ENCODE measurements at regions of chr2 and their contacts with region 1.

Region 1: DNA sequence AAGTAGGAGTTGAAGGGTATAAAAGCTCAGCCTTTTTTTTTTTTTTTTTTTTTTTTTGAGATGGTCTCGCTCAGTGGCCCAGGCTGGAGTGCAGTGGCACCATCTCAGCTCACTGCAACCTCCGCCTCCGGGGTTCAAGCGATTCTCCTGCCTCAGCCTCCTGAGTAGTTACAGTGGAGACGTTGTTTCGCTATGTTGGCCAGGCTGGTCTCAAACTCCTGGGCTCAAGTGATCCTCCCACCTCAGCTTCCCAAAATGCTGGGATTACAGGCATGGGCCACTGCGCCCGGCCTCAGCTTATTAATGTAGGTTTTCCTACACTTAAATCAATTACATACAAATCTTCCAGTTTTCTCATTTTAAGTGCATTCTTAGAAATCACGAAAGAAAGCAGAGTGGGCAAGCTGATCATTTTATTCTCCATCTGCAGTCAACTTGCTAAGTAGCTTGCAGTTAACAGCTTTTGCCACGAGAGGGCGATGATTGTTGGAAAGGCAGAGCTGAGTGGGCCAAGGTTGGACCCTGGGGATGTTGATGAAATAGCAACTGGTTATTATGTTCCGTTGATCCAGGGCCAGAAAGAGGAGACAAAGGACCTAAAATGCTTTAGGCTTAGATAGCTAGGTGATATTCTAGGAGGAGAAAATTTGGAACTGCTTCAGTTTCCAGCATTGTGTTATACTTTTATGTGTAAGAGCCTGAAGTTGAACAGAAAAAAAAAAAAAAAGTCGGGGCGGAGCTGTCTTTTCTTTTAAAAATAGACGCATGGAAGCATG is 234.4 kb upstream of the EPAS1 start:
- DNase-seq: peak; percentile 79
- ATAC-seq: peak; percentile 86

Region 2: DNA sequence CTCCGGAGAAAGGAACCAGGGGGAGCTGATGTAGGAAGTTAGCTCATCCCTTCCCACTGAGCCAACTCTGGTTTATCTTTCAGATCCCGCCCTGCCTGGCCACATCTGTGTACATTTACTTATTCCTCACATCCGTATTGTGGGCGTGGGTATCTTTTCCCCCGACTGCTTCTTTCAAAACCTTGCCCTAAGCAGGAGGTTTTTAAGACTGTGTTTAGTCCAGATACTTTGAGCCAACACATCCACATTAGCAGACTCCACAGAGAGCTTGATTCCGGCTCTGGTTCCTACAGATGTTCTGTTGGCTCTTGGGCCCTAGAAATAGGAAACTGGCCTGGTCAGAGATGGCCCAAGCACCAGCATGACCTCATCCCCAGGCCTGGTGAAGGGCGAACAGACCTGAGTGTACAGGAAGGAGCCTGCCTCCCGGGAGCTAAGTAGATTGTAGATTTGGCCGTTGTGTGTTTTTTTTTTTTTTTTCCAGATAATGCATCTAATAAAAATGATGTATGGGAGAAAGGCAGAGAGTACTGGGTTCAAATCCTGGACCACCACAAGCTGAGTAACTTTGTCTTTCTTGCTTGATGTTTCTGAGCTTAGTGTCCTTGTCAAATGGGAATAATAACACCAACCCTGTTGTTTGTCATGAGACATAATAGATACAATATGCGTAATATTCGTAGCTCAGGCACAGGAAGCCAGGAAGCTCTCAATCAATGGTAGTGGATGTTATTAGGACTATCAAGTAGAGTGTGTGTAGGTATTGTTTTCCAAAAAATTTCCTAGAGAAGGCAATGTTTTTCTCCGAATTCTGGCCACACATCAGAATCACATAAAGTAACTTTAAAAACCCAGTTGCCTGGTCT is 319.1 kb before region 1 on chr2:
- intact Hi-C with region 1: no loop called
- DNase-seq: peak; percentile 76
- ATAC-seq: peak; percentile 81

Region 3: DNA sequence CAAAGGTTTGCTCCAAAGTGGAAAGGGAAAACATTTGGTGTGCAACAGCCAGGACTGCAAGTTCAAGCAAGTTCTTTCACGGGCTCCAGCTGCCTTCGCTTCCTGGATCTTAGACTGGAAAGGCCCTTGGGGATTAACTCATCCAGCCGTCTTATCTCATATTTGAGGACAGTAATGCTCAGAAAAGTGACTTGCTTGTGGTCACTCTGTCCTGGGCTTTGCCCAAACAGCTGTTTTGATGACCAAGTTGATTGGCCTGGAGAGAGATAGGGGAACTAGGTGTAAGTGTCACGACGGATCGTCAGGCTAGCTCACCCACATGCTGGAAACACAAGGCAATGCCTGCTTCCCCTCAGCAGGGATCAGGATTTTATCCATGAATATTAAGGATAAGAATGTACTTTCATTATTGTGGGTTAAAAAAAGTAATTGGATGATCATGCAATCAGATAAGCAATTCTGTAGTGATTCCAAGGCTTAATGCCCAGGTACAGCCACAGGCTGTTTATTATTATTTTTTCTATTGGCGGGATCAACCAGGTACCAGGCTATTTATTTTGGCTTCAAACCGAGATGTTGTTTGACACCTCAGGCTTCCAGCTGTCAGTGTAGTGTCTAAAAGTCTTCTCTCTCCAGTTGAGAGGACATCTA is 71.8 kb after region 1 on chr2:
- intact Hi-C with region 1: loop called (anchors 10 kb)
- DNase-seq: peak; percentile 71
- ATAC-seq: peak; percentile 81

Region 4: GRCh38 chr2:46187112-46187618 is 124.3 kb after region 1 on chr2:
- intact Hi-C with region 1: no loop called
- DNase-seq: peak; percentile 56
- ATAC-seq: peak; percentile 71

Region 5: GRCh38 chr2:46296840-46297545 is 234.2 kb after region 1 on chr2 and contains the start of gene EPAS1:
- intact Hi-C with region 1: loop called (anchors 2 kb)
- DNase-seq: peak; percentile 98
- ATAC-seq: peak; percentile 83
- total RNA-seq, gene EPAS1: 200 TPM